ENCODE measurements at regions of chr2 and their contacts with region 1.

Region 1: DNA sequence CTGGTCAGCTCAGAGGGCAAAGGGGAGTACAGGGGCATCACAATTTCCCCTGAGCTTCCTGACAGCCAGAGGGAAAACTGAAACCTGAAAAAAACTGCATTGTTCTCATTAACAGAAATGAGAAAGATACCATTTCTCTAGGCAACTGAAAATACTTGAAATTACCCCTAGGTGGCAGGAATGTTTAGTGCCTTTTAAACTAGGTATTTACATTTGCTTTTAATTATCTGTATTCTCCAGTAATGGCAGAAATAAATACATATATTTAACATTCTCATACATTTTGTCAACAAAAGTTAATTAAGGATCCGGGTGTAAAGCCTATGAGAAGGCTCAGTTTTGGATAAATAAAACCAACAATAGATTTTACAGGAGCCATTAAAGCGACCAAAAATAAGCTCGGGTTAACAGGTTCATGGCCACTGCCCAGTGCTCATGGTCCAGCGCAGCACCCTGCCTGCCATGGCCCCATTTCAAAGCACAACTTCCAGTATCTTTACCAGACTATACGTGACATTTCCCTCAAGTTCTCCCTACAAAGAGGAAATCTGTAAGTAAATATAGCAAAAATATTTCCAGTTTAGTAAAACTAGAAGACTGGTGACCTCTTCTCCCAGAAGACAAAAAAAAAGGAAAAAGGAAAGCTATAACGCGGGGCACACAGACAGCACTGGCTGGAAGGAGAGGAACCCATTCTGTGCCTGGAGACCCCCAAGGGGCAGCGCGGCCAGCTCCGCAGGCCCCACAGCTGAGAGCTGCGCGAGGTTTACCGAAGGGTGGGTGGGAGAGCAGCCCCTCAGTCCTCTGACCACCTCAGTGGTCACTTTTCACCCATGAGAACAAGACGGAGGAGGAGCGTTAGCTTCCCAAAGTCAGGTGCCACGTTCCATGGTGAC is 34.7 kb downstream of the RPL31 start:
- DNase-seq: no peak
- ATAC-seq: no peak
- H3K4me3 ChIP-seq: no peak overlapping the region
- H3K4me3 Mint-ChIP-seq: no peak overlapping the region
- H3K27ac ChIP-seq: no peak overlapping the region
- H3K27ac Mint-ChIP-seq: no peak overlapping the region
- H3K4me1 ChIP-seq: no peaks in the 10 kb centered on the region
- H3K4me1 Mint-ChIP-seq: no peaks in the 10 kb centered on the region
- H3K27me3 ChIP-seq: no peaks in the 10 kb centered on the region
- H3K27me3 Mint-ChIP-seq: peaks cover 2 to 12% of the 10 kb centered on the region in 2 donors
- CTCF ChIP-seq: no peak

Region 2: DNA sequence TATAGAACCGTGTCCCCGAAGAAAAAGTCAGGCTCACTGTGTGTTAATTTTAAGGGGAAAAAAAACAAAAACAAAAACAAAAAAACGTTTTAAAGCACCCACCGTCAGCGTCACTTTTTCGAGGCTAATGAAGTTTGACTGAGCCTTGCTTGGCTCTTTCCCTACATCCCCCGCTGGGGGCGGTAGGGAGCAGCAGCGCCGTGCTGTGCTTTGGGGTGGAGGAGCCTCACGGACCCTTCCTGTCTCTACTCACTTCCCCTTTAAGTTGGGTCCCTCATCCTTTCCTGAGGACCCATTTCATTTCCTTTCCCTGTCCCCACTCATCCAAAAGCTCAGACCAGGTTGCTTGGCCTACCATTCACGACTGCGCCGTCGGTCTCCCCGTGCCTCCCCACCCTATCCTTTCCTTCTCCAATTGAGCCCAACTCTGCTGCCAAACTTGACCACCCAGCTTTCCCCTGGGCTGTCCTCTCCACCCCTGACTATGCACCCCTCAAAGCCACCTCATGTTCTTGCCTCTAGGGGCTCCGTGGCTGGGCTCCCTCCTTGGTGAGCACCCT is 117.4 kb before region 1 on chr2:
- intact Hi-C with region 1: no loop called
- DNase-seq: peak in 1 of 2 donors; percentile 35
- ATAC-seq: no peak
- H3K4me3 ChIP-seq: no peak overlapping the region
- H3K4me3 Mint-ChIP-seq: no peak overlapping the region
- H3K27ac ChIP-seq: no peak overlapping the region
- H3K27ac Mint-ChIP-seq: no peak overlapping the region
- H3K4me1 ChIP-seq: no peaks in the 10 kb centered on the region
- H3K4me1 Mint-ChIP-seq: no peaks in the 10 kb centered on the region
- H3K27me3 ChIP-seq: no peaks in the 10 kb centered on the region
- H3K27me3 Mint-ChIP-seq: peaks cover 10 to 36% of the 10 kb centered on the region in 2 donors
- CTCF ChIP-seq: peak; percentile 31

Region 3: GRCh38 chr2:101151141-101151858 is 114.5 kb after region 1 on chr2 and contains the start of gene TBC1D8:
- intact Hi-C with region 1: loop called (anchors 5 kb)
- DNase-seq: peak; percentile 38 to 71
- ATAC-seq: peak; percentile 75 to 83 (median 79)
- H3K4me3 ChIP-seq: peak within 1 kb of the TSS; percentile 51
- H3K4me3 Mint-ChIP-seq: peak within 1 kb of the TSS; percentile 84
- H3K27ac ChIP-seq: no peak within 1 kb of the TSS
- H3K27ac Mint-ChIP-seq: peak within 1 kb of the TSS; percentile 51 to 71
- H3K4me1 ChIP-seq: peaks cover 32% of the 10 kb centered on the region
- H3K4me1 Mint-ChIP-seq: peaks cover 22 to 33% of the 10 kb centered on the region in 2 donors
- H3K27me3 ChIP-seq: peaks cover 23% of the 10 kb centered on the region
- H3K27me3 Mint-ChIP-seq: peaks cover 25 to 33% of the 10 kb centered on the region in 2 donors
- CTCF ChIP-seq: no peak
- total RNA-seq, gene TBC1D8: 2.2 to 8.7 (median 5.1) TPM